OCI-LY7 (cell line): ENCODE measurements at regions of chr20 and their contacts with region 1.

Region 1: GRCh38 chr20:51800060-51800794 is 2.1 kb downstream of the SALL4 start:
- DNase-seq: peak; percentile 45
- H3K4me3 ChIP-seq: no peak overlapping the region
- H3K27ac ChIP-seq: no peak overlapping the region
- H3K4me1 ChIP-seq: no peaks in the 10 kb centered on the region
- CTCF ChIP-seq: peak; percentile 94

Region 2: DNA sequence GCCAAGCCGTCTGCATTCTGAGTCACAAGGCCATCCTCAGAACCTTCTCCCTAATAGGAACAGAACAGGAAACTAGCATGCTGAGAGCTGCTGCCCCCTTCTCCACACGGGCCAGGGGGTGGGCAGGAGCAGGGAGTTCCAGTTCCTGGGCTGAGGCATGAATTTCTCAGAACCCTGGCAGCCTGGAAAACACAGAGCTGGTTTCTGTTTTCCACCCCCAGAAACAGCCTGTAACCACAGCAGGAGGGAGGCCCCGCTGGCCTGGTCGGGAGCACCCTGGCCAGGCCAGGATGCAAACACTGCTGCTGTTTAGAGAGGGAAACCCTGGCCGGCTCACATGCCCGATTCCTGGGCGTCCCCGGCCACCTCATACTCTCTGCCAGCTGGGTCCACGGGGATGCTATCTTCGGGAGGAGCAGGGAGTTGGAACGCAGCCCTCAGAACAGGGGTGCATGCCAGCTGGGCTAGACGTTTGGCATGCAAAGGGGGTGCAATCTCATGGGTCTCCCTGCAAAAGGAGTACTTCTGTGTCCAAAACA is 387.8 kb before region 1 on chr20:
- CTCF ChIA-PET with region 1: no interaction called
- POLR2A ChIA-PET with region 1: no interaction called
- intact Hi-C with region 1: no loop called
- DNase-seq: no peak
- H3K4me3 ChIP-seq: no peak overlapping the region
- H3K27ac ChIP-seq: no peak overlapping the region
- H3K4me1 ChIP-seq: peaks cover 62% of the 10 kb centered on the region
- CTCF ChIP-seq: no peak

Region 3: DNA sequence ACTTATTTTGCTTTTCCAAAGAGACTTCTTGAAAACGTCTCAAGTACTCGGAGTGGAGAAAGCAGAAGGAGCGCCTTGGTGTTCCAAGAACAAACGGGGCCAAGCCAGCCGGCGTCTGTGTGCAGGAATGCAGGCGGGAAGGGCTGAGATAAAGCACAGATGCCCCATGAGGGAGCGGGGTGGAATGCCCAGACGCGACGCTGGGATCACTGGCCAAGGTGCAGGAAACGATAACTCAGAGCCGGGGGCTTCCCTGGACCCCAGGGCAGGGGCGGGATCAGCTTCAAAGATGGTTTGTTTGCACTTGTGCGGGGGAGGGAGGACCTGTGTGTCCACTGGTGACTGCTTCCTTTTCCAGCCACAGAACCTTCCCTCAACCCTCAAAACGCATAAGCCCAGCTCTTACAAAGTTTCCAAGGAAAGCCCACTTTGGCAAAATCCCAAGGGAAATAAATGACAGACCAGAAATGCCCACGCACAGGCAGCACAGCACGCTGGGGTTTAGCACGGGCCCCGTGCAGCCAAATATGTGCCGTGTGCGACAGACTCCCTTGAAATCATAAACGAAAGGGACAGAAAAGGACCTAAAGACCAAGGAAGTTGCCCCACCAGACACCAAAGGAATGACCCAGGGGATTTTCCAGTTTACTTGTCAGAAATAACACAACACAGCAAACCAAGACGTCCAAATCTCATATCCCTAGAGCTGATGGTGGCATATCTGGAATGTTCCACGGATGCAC is 371.7 kb before region 1 on chr20:
- CTCF ChIA-PET with region 1: no interaction called
- POLR2A ChIA-PET with region 1: no interaction called
- intact Hi-C with region 1: no loop called
- DNase-seq: no peak
- H3K4me3 ChIP-seq: no peak overlapping the region
- H3K27ac ChIP-seq: no peak overlapping the region
- H3K4me1 ChIP-seq: peaks cover 38% of the 10 kb centered on the region
- CTCF ChIP-seq: no peak

Region 4: GRCh38 chr20:51776261-51776660 is 24.0 kb before region 1 on chr20:
- CTCF ChIA-PET with region 1: no interaction called
- POLR2A ChIA-PET with region 1: no interaction called
- intact Hi-C with region 1: no loop called
- DNase-seq: no peak
- H3K4me3 ChIP-seq: no peak overlapping the region
- H3K27ac ChIP-seq: no peak overlapping the region
- H3K4me1 ChIP-seq: no peaks in the 10 kb centered on the region
- CTCF ChIP-seq: no peak

Region 5: GRCh38 chr20:52083627-52084232 is 283.5 kb after region 1 on chr20:
- CTCF ChIA-PET with region 1: no interaction called
- POLR2A ChIA-PET with region 1: no interaction called
- intact Hi-C with region 1: loop called (anchors 2 kb)
- DNase-seq: peak; percentile 64
- H3K4me3 ChIP-seq: no peak overlapping the region
- H3K27ac ChIP-seq: no peak overlapping the region
- H3K4me1 ChIP-seq: no peaks in the 10 kb centered on the region
- CTCF ChIP-seq: peak; percentile 88